ENCODE measurements at regions of chrX and their contacts with region 1.

Region 1: GRCh38 chrX:10707773-10708172 is 87.4 kb upstream of the MID1 start:
- DNase-seq: no peak
- ATAC-seq: no peak
- H3K4me3 ChIP-seq: no peak overlapping the region
- H3K4me3 Mint-ChIP-seq: no peak overlapping the region
- H3K27ac ChIP-seq: no peak overlapping the region
- H3K27ac Mint-ChIP-seq: no peak overlapping the region
- H3K4me1 ChIP-seq: no peaks in the 10 kb centered on the region
- H3K4me1 Mint-ChIP-seq: no peaks in the 10 kb centered on the region
- H3K27me3 ChIP-seq: no peaks in the 10 kb centered on the region
- H3K27me3 Mint-ChIP-seq: no peaks in the 10 kb centered on the region

Region 2: GRCh38 chrX:10589098-10589497 is 118.7 kb before region 1 on chrX:
- CTCF ChIA-PET with region 1: interaction called in 1 of 2 experiments, 10 read pairs
- POLR2A ChIA-PET with region 1: no interaction called
- DNase-seq: no peak
- ATAC-seq: no peak
- H3K4me3 ChIP-seq: no peak overlapping the region
- H3K4me3 Mint-ChIP-seq: no peak overlapping the region
- H3K27ac ChIP-seq: no peak overlapping the region
- H3K27ac Mint-ChIP-seq: no peak overlapping the region
- H3K4me1 ChIP-seq: no peaks in the 10 kb centered on the region
- H3K4me1 Mint-ChIP-seq: no peaks in the 10 kb centered on the region
- H3K27me3 ChIP-seq: no peaks in the 10 kb centered on the region
- H3K27me3 Mint-ChIP-seq: peaks cover 0 to 3% of the 10 kb centered on the region in 2 donors

Measured in T-cell (primary cell).